Activated T-helper 2 cell treated with anti-CD3 and anti-CD28 coated beads, Interferon-gamma antibody, Interleukin-2, Interleukin-4, amounts not matched to agents 10 μg/mL and 5 μg/mL and 100 μg/mL, durations not matched to agents 14 hours and 24 hours and 36 hours (primary cell): ENCODE measurements at regions of chr2 and their contacts with region 1.

Region 1: GRCh38 chr2:46650556-46651001 is 171.2 kb downstream of the TMEM247 start:
- DNase-seq: peak; percentile 36
- H3K4me3 Mint-ChIP-seq: no peak overlapping the region
- H3K27ac Mint-ChIP-seq: no peak overlapping the region
- H3K4me1 Mint-ChIP-seq: no peaks in the 10 kb centered on the region
- H3K27me3 Mint-ChIP-seq: peaks cover 7% of the 10 kb centered on the region

Region 2: DNA sequence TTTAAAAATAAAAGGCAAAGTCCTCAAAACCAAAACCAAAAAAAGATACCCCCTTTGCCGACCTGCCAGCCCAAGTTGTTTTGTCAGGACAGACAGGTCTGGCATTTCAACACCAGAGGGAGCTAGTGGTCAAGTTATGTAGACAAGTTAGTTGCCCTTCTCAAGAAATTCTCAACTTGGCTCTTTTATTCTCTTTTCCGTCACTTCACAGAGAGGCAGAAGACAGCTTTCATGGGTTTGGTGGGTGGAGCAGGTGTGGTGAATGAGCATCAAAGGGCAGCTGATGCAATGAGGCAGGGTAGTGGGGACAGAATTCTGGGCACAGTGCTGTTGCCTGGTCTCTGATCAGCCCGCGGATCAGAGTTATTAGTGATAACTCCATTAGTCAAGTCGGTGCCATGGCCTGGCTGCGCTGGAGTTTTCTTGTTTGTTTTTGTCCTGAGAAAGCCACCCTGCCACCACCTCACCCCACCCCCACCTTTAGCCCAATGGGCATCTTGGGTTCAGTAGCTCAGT is 657.0 kb before region 1 on chr2:
- intact Hi-C with region 1: loop called (anchors 2 kb)
- DNase-seq: peak; percentile 44
- H3K4me3 Mint-ChIP-seq: no peak overlapping the region
- H3K27ac Mint-ChIP-seq: no peak overlapping the region
- H3K4me1 Mint-ChIP-seq: peaks cover 2% of the 10 kb centered on the region
- H3K27me3 Mint-ChIP-seq: peaks cover 6% of the 10 kb centered on the region

Region 3: GRCh38 chr2:46699934-46700256 is 49.3 kb after region 1 on chr2:
- intact Hi-C with region 1: no loop called
- DNase-seq: no peak
- H3K4me3 Mint-ChIP-seq: peak overlapping the region; percentile 93
- H3K27ac Mint-ChIP-seq: peak overlapping the region; percentile 83
- H3K4me1 Mint-ChIP-seq: peaks cover 39% of the 10 kb centered on the region
- H3K27me3 Mint-ChIP-seq: peaks cover 9% of the 10 kb centered on the region

Region 4: DNA sequence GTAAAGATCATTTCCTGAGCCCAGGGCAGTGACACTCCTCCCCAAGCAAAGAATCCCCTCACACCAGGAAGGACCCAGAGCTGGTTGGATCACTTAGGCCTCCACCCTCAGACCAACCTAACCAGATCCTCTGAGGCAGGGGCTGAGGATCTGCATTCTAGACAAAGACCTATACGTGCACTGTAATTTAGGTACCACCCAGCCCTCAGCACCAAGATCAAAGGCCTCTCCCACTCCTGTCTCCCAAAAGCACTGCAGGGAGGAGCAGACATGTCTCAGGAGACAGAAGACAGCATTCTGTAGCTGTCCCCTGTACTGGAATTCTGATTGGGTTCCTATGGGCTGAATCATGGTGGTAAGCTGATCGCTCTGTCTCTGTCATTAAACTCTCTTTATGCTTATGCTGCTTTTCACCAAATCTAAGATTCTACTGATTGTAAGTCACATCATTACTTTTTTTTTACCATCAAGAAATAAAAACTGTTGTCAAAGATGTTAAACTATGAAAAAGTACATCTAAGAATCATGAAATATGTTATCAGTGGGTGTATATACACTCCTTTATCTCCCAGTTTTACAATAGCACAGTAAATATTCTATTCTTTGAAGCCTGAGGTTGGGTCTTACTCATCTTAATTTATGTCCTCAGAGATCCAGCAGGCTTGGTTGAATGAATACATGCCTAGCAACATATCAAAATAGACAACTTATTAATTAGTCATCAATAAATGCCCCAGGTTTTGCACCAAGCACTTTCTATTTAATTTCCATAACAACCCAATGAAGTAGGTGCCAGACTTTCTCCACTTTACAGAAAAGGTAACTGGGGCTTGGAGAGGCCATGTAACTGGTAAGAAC is 236.7 kb after region 1 on chr2:
- intact Hi-C with region 1: loop called (anchors 5 kb)
- DNase-seq: no peak
- H3K4me3 Mint-ChIP-seq: no peak overlapping the region
- H3K27ac Mint-ChIP-seq: no peak overlapping the region
- H3K4me1 Mint-ChIP-seq: peaks cover 3% of the 10 kb centered on the region
- H3K27me3 Mint-ChIP-seq: peaks cover 25% of the 10 kb centered on the region